ENCODE measurements at regions of chr15 and their contacts with region 1.

Region 1: DNA sequence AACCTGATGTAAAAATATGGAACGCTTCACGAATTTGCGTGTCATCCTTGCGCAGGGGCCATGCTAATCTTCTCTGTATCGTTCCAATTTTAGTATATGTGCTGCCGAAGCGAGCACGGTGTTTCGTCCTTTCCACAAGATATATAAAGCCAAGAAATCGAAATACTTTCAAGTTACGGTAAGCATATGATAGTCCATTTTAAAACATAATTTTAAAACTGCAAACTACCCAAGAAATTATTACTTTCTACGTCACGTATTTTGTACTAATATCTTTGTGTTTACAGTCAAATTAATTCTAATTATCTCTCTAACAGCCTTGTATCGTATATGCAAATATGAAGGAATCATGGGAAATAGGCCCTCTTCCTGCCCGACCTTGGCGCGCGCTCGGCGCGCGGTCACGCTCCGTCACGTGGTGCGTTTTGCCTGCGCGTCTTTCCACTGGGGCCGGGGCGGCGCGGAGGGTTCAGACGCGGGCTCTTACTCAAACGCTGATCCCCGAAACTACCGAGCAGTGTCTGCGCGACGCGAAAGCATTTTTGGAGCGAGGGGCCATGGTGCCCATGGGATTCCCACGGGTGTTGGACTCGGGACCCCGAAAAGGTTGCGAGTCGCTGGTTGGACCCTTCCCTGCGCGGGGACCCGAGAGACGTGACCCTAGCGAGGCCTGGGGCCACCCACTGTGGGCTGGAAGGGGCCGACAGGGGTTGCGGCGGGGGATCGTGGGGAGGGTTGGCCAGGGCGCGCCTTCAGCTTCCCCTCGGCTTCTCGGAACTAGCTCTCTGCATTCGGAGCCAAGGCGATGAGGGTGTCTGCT is at the start of gene RNU6-1:
- DNase-seq: peak; percentile 99

Region 2: DNA sequence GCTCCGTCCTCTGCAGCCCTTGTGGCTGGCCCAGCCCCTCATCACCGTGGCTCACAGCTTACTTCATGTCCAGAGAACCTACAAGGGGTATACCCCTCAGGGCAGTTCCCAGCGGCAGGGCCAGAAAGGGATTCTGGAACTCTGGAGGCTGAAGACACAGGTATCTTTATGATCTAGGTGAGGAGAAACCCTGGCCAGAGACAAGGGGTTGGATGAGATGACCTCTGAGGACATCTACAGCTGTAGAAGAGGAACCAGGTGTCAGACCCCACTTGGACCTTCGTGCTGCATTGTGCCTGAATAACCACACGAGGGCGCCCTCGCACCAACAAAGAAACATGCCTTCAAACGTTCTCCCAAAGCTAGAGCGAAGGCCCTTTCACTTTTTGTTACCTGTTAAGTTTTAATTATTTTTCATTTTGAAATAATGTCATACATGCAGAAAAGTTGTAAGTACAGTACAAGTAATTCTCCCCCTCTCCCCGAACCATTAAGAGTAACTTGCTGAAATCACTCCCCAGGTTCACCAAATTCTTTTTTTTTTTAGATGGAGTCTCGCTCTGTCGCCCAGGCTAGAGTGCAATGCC is 893.5 kb before region 1 on chr15:
- in situ Hi-C with region 1: loop called (anchors 10 kb)
- DNase-seq: peak; percentile 95

Region 3: DNA sequence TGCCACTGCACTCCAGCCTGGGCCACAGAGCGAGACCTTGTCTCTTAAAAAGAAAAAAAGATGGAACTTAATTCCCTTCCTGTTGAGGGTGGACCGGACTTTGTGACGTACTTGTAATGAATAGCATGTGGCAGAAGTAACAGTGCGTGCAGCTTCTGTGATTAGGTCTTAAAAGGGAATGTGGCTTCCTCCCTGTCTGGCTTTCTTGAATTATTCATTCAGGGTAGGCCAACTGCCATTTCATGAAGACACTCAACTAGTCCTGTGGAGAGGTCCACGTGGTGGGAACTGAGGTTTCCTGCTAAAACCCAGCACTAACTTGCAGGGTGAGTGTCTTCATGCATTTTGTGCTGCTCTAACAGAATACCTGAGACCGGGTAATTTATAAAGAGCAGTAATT is 115.1 kb after region 1 on chr15:
- in situ Hi-C with region 1: no loop called
- DNase-seq: peak; percentile 89

Measured in KBM-7 (cell line).